ENCODE measurements at regions of chr16 and their contacts with region 1.

Region 1: GRCh38 chr16:2213817-2214720 is 571 bp downstream of the PGP start:
- DNase-seq: no peak
- H3K4me3 Mint-ChIP-seq: peak overlapping the region; percentile 80
- H3K27ac Mint-ChIP-seq: peak overlapping the region; percentile 51
- H3K4me1 Mint-ChIP-seq: peaks cover 16% of the 10 kb centered on the region
- H3K27me3 Mint-ChIP-seq: no peaks in the 10 kb centered on the region

Region 2: DNA sequence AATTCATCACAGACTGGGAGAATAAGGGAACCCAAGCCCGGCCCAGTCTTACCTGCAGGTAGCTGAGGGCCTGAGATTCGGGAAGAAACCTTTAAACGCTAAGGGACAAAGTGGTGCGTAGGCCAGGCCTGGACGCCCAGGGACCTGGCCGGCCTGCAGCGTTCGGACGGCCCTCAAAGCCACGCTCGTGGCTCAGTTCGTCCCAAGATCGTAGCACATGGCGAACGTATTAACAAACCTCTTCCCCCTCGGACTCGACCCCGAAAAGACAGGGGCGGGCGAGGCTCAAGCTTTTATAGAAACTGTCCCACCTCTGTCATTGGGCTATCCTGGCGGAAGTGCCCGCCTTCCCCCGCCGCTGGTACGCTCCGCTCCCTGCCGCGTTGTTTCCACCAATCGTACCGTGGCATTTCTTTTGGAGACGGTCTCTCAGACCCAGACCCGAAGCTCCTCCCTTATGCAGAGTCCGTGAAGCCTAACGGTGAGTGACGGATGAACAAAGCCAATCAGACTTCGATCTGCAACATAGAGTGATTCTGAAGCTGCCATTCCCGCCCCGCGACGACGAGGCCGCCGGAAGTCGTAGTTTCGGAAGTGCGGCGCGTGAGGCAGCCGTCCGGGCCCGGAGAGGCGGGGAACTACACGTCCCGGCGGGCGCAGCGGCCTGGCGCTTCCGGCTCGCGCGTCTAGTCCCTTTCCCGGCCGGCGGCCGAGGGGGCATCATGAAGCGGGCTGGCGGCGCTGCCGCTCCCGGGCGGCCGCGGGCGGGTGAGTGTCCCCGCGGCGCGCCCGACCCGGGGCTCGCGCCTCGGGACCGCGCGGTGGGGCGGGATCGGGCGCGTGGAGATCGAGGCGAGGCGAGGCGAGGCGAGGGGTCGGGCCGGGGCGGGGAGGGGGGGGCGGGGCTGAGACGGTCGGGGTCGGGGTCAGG is 58.7 kb before region 1 on chr16 and contains the start of gene TRAF7:
- intact Hi-C with region 1: loop called (anchors 2 kb)
- DNase-seq: peak; percentile 98
- H3K4me3 Mint-ChIP-seq: peak within 1 kb of the TSS; percentile 92
- H3K27ac Mint-ChIP-seq: peak within 1 kb of the TSS; percentile 87
- H3K4me1 Mint-ChIP-seq: peaks cover 20% of the 10 kb centered on the region
- H3K27me3 Mint-ChIP-seq: no peaks in the 10 kb centered on the region
- total RNA-seq, gene TRAF7: 69.8 and 70.7 TPM in 2 replicates